ENCODE measurements at regions of chr4 and their contacts with region 1.

Region 1: DNA sequence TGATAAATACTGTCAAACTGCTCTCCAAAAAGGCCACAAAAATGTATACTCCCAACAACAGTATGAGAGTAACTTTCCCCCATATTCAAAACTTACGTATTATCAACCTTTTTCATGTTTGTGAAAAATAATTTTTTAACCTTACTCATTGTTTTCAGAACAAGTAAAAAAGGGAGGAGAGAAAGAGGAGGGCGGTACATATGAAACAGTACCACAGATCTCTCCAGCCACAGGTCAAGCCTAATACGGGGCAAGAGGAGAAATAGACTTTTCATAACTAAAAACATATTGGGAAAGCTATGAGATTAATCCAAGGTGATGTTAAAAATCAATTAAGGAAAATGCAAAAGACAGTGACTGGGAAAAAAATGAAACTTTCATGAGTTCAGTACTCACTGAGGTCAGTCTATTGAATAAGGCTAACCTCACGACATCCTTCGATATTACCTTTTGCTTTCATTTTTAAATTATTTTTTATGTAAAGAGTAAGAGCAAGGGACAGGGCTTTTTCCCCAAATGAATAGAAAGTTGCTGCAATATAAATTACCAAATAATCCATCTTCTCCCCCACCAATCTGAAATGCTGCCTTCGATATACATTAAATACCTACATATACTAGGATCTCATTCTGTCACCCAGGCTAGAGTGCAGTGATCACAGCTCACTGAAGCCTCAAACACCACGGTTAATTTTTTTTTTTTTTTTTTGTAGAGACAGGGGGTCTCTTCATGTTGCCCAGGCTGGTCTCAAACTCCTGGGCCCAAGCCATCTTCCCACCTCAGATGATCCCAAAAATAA is 25.3 kb downstream of the FBXW7 start:
- DNase-seq: no peak
- ATAC-seq: no peak
- H3K4me3 Mint-ChIP-seq: peak overlapping the region; percentile 52
- H3K27ac Mint-ChIP-seq: peak overlapping the region; percentile 68
- H3K4me1 Mint-ChIP-seq: peaks cover 61% of the 10 kb centered on the region
- H3K27me3 Mint-ChIP-seq: no peaks in the 10 kb centered on the region
- CTCF ChIP-seq: no peak

Region 2: DNA sequence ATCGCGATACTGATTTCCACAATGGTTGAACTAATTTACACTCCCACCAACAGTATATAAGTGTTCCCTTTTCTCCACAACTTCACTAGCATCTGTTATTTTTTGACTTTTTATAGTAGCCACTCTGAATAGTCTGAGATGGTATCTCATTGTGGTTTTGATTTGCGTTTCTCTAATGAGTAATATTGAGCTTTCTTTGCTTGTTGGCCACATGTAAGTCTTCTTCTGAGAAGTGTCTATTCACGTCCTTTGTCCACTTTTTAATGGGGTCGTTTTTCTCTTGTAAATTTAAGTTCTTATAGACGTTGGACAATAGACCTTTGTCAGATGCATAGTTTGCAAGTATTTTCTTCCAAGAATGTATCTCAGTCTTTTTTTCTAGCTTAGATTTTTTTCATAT is 15.3 kb after region 1 on chr4:
- CTCF ChIA-PET with region 1: no interaction called
- POLR2A ChIA-PET with region 1: interaction called, 3 read pairs
- intact Hi-C with region 1: loop called (anchors 2 kb)
- DNase-seq: no peak
- ATAC-seq: peak; percentile 31
- H3K4me3 Mint-ChIP-seq: peak overlapping the region; percentile 11
- H3K27ac Mint-ChIP-seq: no peak overlapping the region
- H3K4me1 Mint-ChIP-seq: peaks cover 65% of the 10 kb centered on the region
- H3K27me3 Mint-ChIP-seq: no peaks in the 10 kb centered on the region
- CTCF ChIP-seq: no peak

Region 3: GRCh38 chr4:152585023-152585441 is 74.5 kb after region 1 on chr4:
- CTCF ChIA-PET with region 1: no interaction called
- POLR2A ChIA-PET with region 1: no interaction called
- intact Hi-C with region 1: loop called (anchors 5 kb)
- DNase-seq: no peak
- ATAC-seq: peak; percentile 57
- H3K4me3 Mint-ChIP-seq: peak overlapping the region; percentile 63
- H3K27ac Mint-ChIP-seq: peak overlapping the region; percentile 87
- H3K4me1 Mint-ChIP-seq: peaks cover 14% of the 10 kb centered on the region
- H3K27me3 Mint-ChIP-seq: no peaks in the 10 kb centered on the region
- CTCF ChIP-seq: no peak